ENCODE measurements at regions of chr1 and their contacts with region 1.

Region 1: DNA sequence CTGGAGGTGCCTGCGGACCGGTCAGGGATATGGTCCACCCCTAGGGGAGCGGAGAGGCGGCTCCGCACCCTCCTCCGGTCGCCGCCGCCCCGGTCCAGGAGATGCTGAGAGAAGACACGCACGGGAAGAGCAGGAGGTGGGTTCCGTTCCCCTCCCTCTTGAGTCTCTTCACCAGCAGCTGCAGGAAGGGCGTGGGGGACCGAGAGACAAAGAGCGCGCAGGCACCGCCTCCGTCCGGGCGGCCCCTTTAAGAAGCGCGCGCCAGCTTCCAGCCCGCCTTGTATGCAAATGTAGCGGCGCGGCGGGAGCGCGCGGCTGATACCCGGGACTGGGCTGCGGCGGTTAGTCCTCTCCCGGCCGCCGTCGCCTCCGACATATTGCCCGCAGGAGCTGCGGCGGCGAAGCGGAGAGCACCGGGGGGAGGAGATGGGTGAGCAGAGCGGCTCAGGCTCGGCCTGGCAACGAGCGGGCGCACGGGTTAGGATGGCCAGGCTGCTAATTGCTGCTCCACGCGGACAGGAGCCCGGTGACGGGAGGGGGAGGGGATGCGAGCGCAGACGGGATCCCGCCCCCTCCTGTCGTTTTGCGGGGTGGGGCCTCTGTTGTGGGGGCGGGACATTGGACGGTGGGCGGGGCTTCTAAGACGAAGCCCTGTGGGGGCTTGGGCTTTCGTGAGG is at the start of gene TMEM39B:
- DNase-seq: peak; percentile 99
- H3K4me3 ChIP-seq: peak within 1 kb of the TSS; percentile 67
- H3K27ac ChIP-seq: peak within 1 kb of the TSS; percentile 87
- H3K4me1 ChIP-seq: peaks cover 22% of the 10 kb centered on the region
- H3K27me3 ChIP-seq: no peaks in the 10 kb centered on the region
- CTCF ChIP-seq: no peak
- total RNA-seq, gene TMEM39B: 30.4 and 32.4 TPM in 2 replicates

Region 2: GRCh38 chr1:31901838-31902509 is 170.8 kb before region 1 on chr1:
- CTCF ChIA-PET with region 1: interaction called, 13 read pairs
- POLR2A ChIA-PET with region 1: no interaction called
- intact Hi-C with region 1: no loop called
- DNase-seq: no peak
- H3K4me3 ChIP-seq: no peak overlapping the region
- H3K27ac ChIP-seq: no peak overlapping the region
- H3K4me1 ChIP-seq: peaks cover 5% of the 10 kb centered on the region
- H3K27me3 ChIP-seq: no peaks in the 10 kb centered on the region
- CTCF ChIP-seq: no peak

Region 3: DNA sequence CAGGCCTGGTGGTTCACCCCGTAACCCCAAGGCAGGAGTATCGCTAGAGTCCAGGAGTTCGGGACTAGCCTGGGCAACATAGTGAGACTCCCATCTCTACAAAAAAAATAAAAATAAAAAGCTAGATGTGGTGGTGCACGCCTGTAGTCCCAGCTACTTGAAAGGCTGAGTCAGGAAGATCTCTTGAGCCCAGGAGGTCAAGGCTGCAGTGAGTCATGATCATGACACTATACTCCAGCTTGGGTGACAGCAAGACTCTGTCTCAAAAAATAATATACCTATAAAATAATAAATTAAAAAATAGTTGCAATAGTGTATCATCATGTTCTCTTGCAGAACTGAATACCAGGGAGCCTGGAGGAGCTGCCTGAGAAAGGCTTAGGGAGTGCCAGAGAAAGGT is 19.9 kb before region 1 on chr1:
- CTCF ChIA-PET with region 1: interaction called, 5 read pairs
- POLR2A ChIA-PET with region 1: interaction called, 10 read pairs
- intact Hi-C with region 1: no loop called
- DNase-seq: no peak
- H3K4me3 ChIP-seq: no peak overlapping the region
- H3K27ac ChIP-seq: no peak overlapping the region
- H3K4me1 ChIP-seq: peaks cover 21% of the 10 kb centered on the region
- H3K27me3 ChIP-seq: no peaks in the 10 kb centered on the region
- CTCF ChIP-seq: no peak

Region 4: GRCh38 chr1:32107742-32108661 is 35.2 kb after region 1 on chr1 and contains the start of gene KPNA6:
- CTCF ChIA-PET with region 1: interaction called, 8 read pairs
- POLR2A ChIA-PET with region 1: interaction called, 3 read pairs
- intact Hi-C with region 1: loop called (anchors 2 kb)
- DNase-seq: peak; percentile 97
- H3K4me3 ChIP-seq: peak within 1 kb of the TSS; percentile 70
- H3K27ac ChIP-seq: peak within 1 kb of the TSS; percentile 89
- H3K4me1 ChIP-seq: peaks cover 8% of the 10 kb centered on the region
- H3K27me3 ChIP-seq: no peaks in the 10 kb centered on the region
- CTCF ChIP-seq: no peak
- total RNA-seq, gene KPNA6: 96.8 and 97.4 TPM in 2 replicates

Region 5: GRCh38 chr1:32142446-32143301 is 69.9 kb after region 1 on chr1:
- CTCF ChIA-PET with region 1: no interaction called
- POLR2A ChIA-PET with region 1: no interaction called
- intact Hi-C with region 1: no loop called
- DNase-seq: peak; percentile 47
- H3K4me3 ChIP-seq: no peak overlapping the region
- H3K27ac ChIP-seq: no peak overlapping the region
- H3K4me1 ChIP-seq: no peaks in the 10 kb centered on the region
- H3K27me3 ChIP-seq: no peaks in the 10 kb centered on the region
- CTCF ChIP-seq: no peak

Region 6: GRCh38 chr1:32179443-32180185 is 106.9 kb after region 1 on chr1 and contains the start of gene TXLNA:
- CTCF ChIA-PET with region 1: no interaction called
- POLR2A ChIA-PET with region 1: interaction called, 11 read pairs
- intact Hi-C with region 1: no loop called
- DNase-seq: peak; percentile 90
- H3K4me3 ChIP-seq: peak within 1 kb of the TSS; percentile 52
- H3K27ac ChIP-seq: peak within 1 kb of the TSS; percentile 94
- H3K4me1 ChIP-seq: peaks cover 14% of the 10 kb centered on the region
- H3K27me3 ChIP-seq: no peaks in the 10 kb centered on the region
- CTCF ChIP-seq: no peak
- total RNA-seq, gene TXLNA: 62.3 and 62.7 TPM in 2 replicates